ENCODE measurements at regions of chr12 and their contacts with region 1.

Region 1: GRCh38 chr12:13326076-13326475 is 129.6 kb downstream of the EMP1 start:
- DNase-seq: no peak
- ATAC-seq: no peak
- H3K4me3 ChIP-seq: no peak overlapping the region
- H3K27ac ChIP-seq: no peak overlapping the region
- H3K4me1 ChIP-seq: no peaks in the 10 kb centered on the region
- H3K27me3 ChIP-seq: no peaks in the 10 kb centered on the region
- CTCF ChIP-seq: no peak
- EP300 ChIP-seq: no peak
- POLR2A ChIP-seq: no peak
- RAD21 ChIP-seq: no peak

Region 2: GRCh38 chr12:13255792-13256691 is 70.0 kb before region 1 on chr12:
- CTCF ChIA-PET with region 1: no interaction called
- POLR2A ChIA-PET with region 1: no interaction called
- in situ Hi-C with region 1: no loop called
- intact Hi-C with region 1: loop called (anchors 10 kb)
- DNase-seq: peak; percentile 86 to 92 (median 90)
- ATAC-seq: peak; percentile 100
- H3K4me3 ChIP-seq: no peak overlapping the region
- H3K27ac ChIP-seq: no peak overlapping the region
- H3K4me1 ChIP-seq: peaks cover 0 to 3% of the 10 kb centered on the region in 2 experiments; a peak in 1 of 5 replicates
- H3K27me3 ChIP-seq: no peaks in the 10 kb centered on the region; a peak in 1 of 5 replicates
- CTCF ChIP-seq: peak; percentile 88 to 91 (median 90)
- EP300 ChIP-seq: no peak
- POLR2A ChIP-seq: no peak
- RAD21 ChIP-seq: peak; percentile 59 to 72

Region 3: GRCh38 chr12:13576935-13577500 is 250.9 kb after region 1 on chr12:
- CTCF ChIA-PET with region 1: no interaction called
- POLR2A ChIA-PET with region 1: no interaction called
- in situ Hi-C with region 1: no loop called
- intact Hi-C with region 1: no loop called
- DNase-seq: no peak
- ATAC-seq: no peak
- H3K4me3 ChIP-seq: no peak overlapping the region
- H3K27ac ChIP-seq: no peak overlapping the region
- H3K4me1 ChIP-seq: no peaks in the 10 kb centered on the region
- H3K27me3 ChIP-seq: no peaks in the 10 kb centered on the region
- CTCF ChIP-seq: no peak
- EP300 ChIP-seq: no peak
- POLR2A ChIP-seq: no peak
- RAD21 ChIP-seq: no peak